AG04449 (cell line): ENCODE measurements at regions of chr16 and their contacts with region 1.

Region 1: GRCh38 chr16:180938-181667 is 844 bp downstream of the HBQ1 start:
- DNase-seq: no peak
- H3K4me3 ChIP-seq: peak overlapping the region; percentile 48
- CTCF ChIP-seq: peak; percentile 98

Region 2: DNA sequence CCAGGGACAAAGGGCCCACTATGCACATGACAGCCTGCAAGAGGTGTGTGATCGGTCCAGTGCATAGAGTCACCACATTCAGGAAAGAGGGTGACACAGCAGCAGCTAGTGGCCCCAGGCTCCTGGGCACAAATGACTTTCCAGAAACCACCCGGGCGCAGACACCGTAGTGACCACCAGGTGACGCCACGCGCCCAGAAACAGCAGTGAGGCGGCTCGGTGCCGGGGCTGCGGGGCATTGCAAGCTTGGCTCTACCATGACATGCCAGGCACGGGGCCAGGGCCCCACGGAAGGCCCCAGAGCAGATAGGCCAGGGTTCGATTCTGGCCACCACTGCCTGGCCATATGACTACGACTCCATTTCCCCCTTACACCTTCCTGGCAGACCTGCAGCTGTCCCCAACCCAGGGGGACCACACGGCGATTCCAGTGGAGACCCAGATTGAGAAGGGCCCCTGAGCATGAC is 115.4 kb before region 1 on chr16:
- CTCF ChIA-PET with region 1: interaction called, 81 read pairs
- POLR2A ChIA-PET with region 1: no interaction called
- DNase-seq: no peak
- H3K4me3 ChIP-seq: no peak overlapping the region
- CTCF ChIP-seq: peak; percentile 96

Region 3: GRCh38 chr16:96935-97381 is 84.1 kb before region 1 on chr16:
- CTCF ChIA-PET with region 1: interaction called, 19 read pairs
- POLR2A ChIA-PET with region 1: no interaction called
- DNase-seq: no peak
- H3K4me3 ChIP-seq: no peak overlapping the region
- CTCF ChIP-seq: peak; percentile 100

Region 4: GRCh38 chr16:117379-118365 is 63.4 kb before region 1 on chr16:
- CTCF ChIA-PET with region 1: interaction called, 32 read pairs
- POLR2A ChIA-PET with region 1: no interaction called
- DNase-seq: no peak
- H3K4me3 ChIP-seq: no peak overlapping the region
- CTCF ChIP-seq: peak; percentile 70

Region 5: GRCh38 chr16:154223-155030 is 26.7 kb before region 1 on chr16:
- CTCF ChIA-PET with region 1: interaction called, 11 read pairs
- POLR2A ChIA-PET with region 1: no interaction called
- DNase-seq: no peak
- H3K4me3 ChIP-seq: peak overlapping the region; percentile 46
- CTCF ChIP-seq: no peak

Region 6: DNA sequence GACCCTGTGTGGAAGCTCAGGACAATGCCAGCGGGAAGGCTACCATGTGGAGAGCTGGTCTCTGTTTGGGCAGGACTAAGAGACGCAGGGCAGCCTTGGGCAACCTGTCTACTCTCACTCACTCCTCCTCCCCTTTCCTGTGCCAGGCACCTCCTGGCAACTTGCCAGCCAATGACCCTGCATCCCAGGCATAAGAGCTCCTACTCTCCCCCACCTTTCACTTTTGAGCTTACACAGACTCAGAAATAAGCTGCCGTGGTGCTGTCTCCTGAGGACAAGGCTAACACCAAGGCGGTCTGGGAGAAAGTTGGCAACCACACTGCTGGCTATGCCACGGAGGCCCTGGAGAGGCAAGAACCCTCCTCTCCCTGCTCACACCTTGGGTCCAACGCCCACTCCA is 12.7 kb before region 1 on chr16:
- CTCF ChIA-PET with region 1: interaction called, 14 read pairs
- POLR2A ChIA-PET with region 1: no interaction called
- DNase-seq: no peak
- H3K4me3 ChIP-seq: no peak overlapping the region
- CTCF ChIP-seq: no peak

Region 7: GRCh38 chr16:212999-213398 is 31.9 kb after region 1 on chr16:
- CTCF ChIA-PET with region 1: interaction called, 23 read pairs
- POLR2A ChIA-PET with region 1: no interaction called
- DNase-seq: no peak
- H3K4me3 ChIP-seq: no peak overlapping the region
- CTCF ChIP-seq: no peak